BJ (cell line): ENCODE measurements at regions of chr4 and their contacts with region 1.

Region 1: DNA sequence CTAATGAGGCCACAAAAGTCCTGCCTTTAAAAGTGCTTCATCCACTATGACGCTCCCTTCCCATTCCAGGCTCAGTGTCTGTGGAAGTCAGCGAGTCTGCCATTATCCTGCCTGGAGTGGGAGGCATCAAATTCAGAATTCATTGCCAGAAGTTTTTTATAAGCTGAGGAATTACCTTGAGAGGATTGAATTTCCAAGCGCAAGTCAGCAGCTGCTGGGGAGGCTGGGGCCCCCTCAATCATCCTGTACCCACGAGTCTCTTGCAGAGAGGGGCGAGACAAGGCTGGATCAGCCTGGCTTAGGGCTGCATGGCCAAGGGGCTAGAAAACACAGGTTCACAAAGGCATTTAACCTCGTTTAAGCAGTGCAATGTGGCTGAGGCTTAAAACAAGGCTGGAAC is 170.5 kb upstream of the NOCT start:
- DNase-seq: no peak
- H3K4me3 ChIP-seq: no peak overlapping the region
- H3K27me3 ChIP-seq: peaks cover 4% of the 10 kb centered on the region; the same call in 1 of the 2 replicates
- CTCF ChIP-seq: no peak

Region 2: GRCh38 chr4:138960175-138960710 is 115.2 kb after region 1 on chr4:
- CTCF ChIA-PET with region 1: no interaction called
- POLR2A ChIA-PET with region 1: interaction called, 10 read pairs
- DNase-seq: no peak
- H3K4me3 ChIP-seq: no peak overlapping the region
- H3K27me3 ChIP-seq: no peaks in the 10 kb centered on the region
- CTCF ChIP-seq: no peak